ENCODE measurements at regions of chr14 and their contacts with region 1.

Region 1: GRCh38 chr14:22653012-22653621 is 9.0 kb upstream of the OR6J1 start:
- DNase-seq: no peak
- ATAC-seq: peak; percentile 93
- H3K4me3 ChIP-seq: no peak overlapping the region
- H3K27ac ChIP-seq: no peak overlapping the region
- H3K4me1 ChIP-seq: no peaks in the 10 kb centered on the region
- H3K27me3 ChIP-seq: no peaks in the 10 kb centered on the region
- CTCF ChIP-seq: peak; percentile 81

Region 2: DNA sequence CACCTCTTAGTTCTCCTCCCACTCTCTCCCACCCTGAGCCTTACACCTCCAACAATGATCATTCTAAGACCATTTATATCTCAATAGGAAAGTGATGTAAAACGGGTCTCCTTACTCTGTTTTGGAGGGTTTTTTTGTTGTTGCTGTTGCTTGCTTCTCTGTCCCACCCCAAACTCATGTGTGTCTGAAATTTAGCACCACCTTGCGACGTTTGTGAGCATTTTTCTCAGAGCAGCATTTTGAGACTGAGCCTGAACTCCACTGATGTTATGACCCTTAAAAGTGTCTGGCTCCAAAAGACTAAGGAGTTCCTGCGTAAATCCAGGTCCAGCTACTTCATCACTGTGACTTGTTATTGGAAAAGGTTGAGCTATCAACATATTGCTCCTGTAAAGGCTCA is 219.1 kb before region 1 on chr14:
- CTCF ChIA-PET with region 1: no interaction called
- POLR2A ChIA-PET with region 1: no interaction called
- in situ Hi-C with region 1: no loop called
- intact Hi-C with region 1: no loop called
- DNase-seq: no peak
- ATAC-seq: no peak
- H3K4me3 ChIP-seq: no peak overlapping the region
- H3K27ac ChIP-seq: no peak overlapping the region
- H3K4me1 ChIP-seq: no peaks in the 10 kb centered on the region; the same call in 1 of the 2 replicates
- H3K27me3 ChIP-seq: no peaks in the 10 kb centered on the region
- CTCF ChIP-seq: peak; percentile 12; the same call in 1 of the 2 replicates

Region 3: GRCh38 chr14:22505697-22506377 is 147.3 kb before region 1 on chr14:
- CTCF ChIA-PET with region 1: no interaction called
- POLR2A ChIA-PET with region 1: no interaction called
- in situ Hi-C with region 1: no loop called
- intact Hi-C with region 1: no loop called
- DNase-seq: no peak
- ATAC-seq: no peak
- H3K4me3 ChIP-seq: no peak overlapping the region
- H3K27ac ChIP-seq: no peak overlapping the region
- H3K4me1 ChIP-seq: no peaks in the 10 kb centered on the region
- H3K27me3 ChIP-seq: peaks cover 3% of the 10 kb centered on the region
- CTCF ChIP-seq: no peak

Region 4: GRCh38 chr14:22556990-22557623 is 96.0 kb before region 1 on chr14:
- CTCF ChIA-PET with region 1: interaction called, 7 read pairs
- POLR2A ChIA-PET with region 1: no interaction called
- in situ Hi-C with region 1: no loop called
- intact Hi-C with region 1: loop called (anchors 5 kb)
- DNase-seq: peak; percentile 50
- ATAC-seq: peak; percentile 92
- H3K4me3 ChIP-seq: peak overlapping the region; percentile 11 to 33; a peak in 2 of 4 replicates
- H3K27ac ChIP-seq: no peak overlapping the region
- H3K4me1 ChIP-seq: 0 out of 2 replicates have a peak, but pooled peaks cover 2% of the 10 kb centered on the region
- H3K27me3 ChIP-seq: no peaks in the 10 kb centered on the region
- CTCF ChIP-seq: peak; percentile 98

Region 5: DNA sequence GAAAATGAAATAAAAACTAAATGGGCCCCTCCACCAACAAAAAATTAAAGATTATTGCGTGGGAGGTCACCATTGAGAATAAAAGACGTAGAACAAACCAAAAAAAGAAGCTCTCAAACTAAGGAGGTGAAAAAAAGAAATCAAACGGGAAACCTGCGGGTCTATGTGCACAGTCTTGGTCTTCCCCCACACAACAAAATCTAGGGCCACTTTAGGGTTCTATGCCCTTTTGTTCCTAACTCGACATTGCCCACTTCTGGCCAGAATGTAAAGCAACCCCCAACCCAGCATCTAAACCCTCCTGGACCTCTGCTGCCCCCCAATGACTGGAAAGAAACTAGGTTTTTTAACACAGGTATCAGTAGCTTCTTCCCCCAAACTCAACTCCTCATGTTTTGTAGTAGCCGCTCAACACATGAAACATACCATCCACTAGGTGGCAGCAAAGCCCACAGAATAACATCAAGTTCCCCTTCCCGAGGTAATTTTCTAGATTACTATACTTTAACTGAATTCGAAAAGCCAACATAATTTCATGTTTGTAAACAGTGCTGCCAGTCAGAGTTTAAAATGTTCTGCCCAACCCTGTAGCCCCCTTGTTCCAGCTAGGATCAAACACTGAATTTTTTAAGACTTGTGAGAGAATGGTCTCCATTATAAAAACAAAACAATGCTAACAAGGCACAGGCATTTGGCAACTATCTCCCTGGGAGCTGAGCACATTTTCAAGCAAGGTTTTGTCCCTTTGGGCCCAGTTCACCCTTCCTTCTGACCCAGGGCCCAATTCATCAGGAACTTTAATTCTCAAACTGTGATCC is 82.8 kb before region 1 on chr14:
- CTCF ChIA-PET with region 1: interaction called, 8 read pairs
- POLR2A ChIA-PET with region 1: no interaction called
- in situ Hi-C with region 1: no loop called
- intact Hi-C with region 1: loop called (anchors 2 kb)
- DNase-seq: peak; percentile 59
- ATAC-seq: peak; percentile 73
- H3K4me3 ChIP-seq: no peak overlapping the region
- H3K27ac ChIP-seq: no peak overlapping the region
- H3K4me1 ChIP-seq: no peaks in the 10 kb centered on the region
- H3K27me3 ChIP-seq: no peaks in the 10 kb centered on the region
- CTCF ChIP-seq: peak; percentile 76

Measured in Panc1 (cell line).